Breast epithelium (tissue), 4 donors: ENCODE measurements at regions of chr10 and their contacts with region 1.

Region 1: DNA sequence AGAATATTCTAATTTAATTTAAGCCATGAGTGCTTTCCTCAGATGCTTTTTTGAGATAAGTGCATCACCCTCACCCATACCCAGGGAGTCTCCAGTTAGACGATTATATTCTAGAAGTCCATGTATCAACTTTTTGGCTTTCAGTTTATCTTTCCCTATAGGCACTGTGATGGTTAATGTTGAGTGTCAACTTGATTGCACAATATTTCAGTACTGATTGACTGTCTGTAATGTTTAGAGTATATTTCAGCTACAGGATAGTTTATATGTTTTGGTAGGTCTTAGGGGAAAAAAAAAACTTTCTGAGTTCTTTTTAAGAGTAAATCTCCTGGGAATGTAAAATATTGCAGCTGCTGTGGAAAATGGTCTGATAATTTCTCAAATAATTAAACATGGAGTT is 535.4 kb downstream of the ADRA2A start:
- DNase-seq: no peak
- H3K4me3 ChIP-seq: no peak overlapping the region
- H3K27ac ChIP-seq: no peak overlapping the region
- H3K4me1 ChIP-seq: no peaks in the 10 kb centered on the region
- H3K27me3 ChIP-seq: no peaks in the 10 kb centered on the region
- CTCF ChIP-seq: no peak
- POLR2A ChIP-seq: no peak

Region 2: DNA sequence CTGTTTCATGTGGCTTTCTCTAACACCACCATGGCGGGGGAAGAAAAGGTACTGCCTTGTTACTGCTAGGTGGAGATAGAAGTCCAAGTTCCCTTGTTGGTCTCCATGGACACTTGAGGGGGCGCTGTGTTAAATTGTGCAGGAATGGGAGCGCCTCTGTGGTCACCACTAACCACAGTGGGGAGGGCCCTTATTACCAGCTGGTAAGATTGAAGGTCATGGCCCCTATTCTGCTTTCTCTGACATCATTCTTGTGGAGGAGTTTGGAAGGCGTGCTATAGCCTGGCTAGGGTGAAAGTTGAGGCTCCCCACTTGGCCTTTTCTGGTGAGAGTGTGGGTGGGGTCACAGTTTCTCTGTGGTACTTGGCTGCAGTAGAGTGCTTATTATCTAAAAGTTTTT is 1419.7 kb before region 1 on chr10:
- intact Hi-C with region 1: no loop called
- DNase-seq: no peak
- H3K4me3 ChIP-seq: no peak overlapping the region
- H3K27ac ChIP-seq: no peak overlapping the region
- H3K4me1 ChIP-seq: no peaks in the 10 kb centered on the region
- H3K27me3 ChIP-seq: no peaks in the 10 kb centered on the region
- CTCF ChIP-seq: no peak
- POLR2A ChIP-seq: no peak

Region 3: DNA sequence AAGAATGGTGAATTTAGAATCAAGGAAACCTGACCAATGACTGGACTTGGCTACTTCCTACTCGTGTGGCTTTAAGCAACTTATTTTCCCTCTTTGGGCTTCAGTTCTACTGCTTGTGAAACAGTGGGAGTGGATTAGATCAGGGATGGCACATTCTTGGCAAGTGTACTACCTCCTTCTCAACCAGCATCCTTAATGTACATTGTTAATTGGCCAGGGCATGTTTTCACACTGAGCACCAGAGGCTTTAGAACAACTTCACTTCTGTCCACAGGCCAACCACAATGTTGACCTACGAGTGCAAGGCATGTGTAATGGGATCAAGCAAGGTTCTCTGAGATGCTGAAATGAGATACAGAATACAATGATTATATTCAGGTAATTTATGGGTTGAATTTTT is 220.1 kb before region 1 on chr10:
- intact Hi-C with region 1: loop called (anchors 5 kb)
- DNase-seq: no peak
- H3K4me3 ChIP-seq: no peak overlapping the region
- H3K27ac ChIP-seq: peak overlapping the region in 1 of 2 donors; percentile 25
- H3K4me1 ChIP-seq: no peaks in the 10 kb centered on the region
- H3K27me3 ChIP-seq: peaks cover 0 to 15% of the 10 kb centered on the region in 2 donors
- CTCF ChIP-seq: no peak
- POLR2A ChIP-seq: no peak

Region 4: GRCh38 chr10:111634191-111634590 is 21.9 kb after region 1 on chr10:
- intact Hi-C with region 1: no loop called
- DNase-seq: no peak
- H3K4me3 ChIP-seq: no peak overlapping the region
- H3K27ac ChIP-seq: no peak overlapping the region
- H3K4me1 ChIP-seq: no peaks in the 10 kb centered on the region
- H3K27me3 ChIP-seq: no peaks in the 10 kb centered on the region
- CTCF ChIP-seq: no peak
- POLR2A ChIP-seq: no peak